Esophagus squamous epithelium (tissue), 5 donors: ENCODE measurements at regions of chr10 and their contacts with region 1.

Region 1: GRCh38 chr10:123559066-123559822 is 106.9 kb upstream of the GPR26 start:
- DNase-seq: no peak
- H3K4me3 ChIP-seq: no peak overlapping the region
- H3K27ac ChIP-seq: no peak overlapping the region
- H3K4me1 ChIP-seq: peaks cover 0 to 4% (median 0%) of the 10 kb centered on the region in 3 donors
- H3K27me3 ChIP-seq: peaks cover 0 to 67% (median 0%) of the 10 kb centered on the region in 4 donors
- CTCF ChIP-seq: peak; percentile 91 to 99 (median 96)
- POLR2A ChIP-seq: no peak

Region 2: GRCh38 chr10:123043409-123043925 is 515.8 kb before region 1 on chr10:
- intact Hi-C with region 1: loop called (anchors 10 kb)
- DNase-seq: no peak
- H3K4me3 ChIP-seq: no peak overlapping the region
- H3K27ac ChIP-seq: no peak overlapping the region
- H3K4me1 ChIP-seq: no peaks in the 10 kb centered on the region
- H3K27me3 ChIP-seq: no peaks in the 10 kb centered on the region
- CTCF ChIP-seq: peak in 5 of 6 experiments; percentile 43 to 77 (median 62)
- POLR2A ChIP-seq: no peak

Region 3: GRCh38 chr10:123132576-123133477 is 426.4 kb before region 1 on chr10:
- intact Hi-C with region 1: loop called (anchors 2 kb)
- DNase-seq: peak; percentile 18
- H3K4me3 ChIP-seq: peak overlapping the region in 2 of 4 donors; percentile 8 to 51
- H3K27ac ChIP-seq: no peak overlapping the region
- H3K4me1 ChIP-seq: peaks cover 44 to 54% (median 50%) of the 10 kb centered on the region in 3 donors
- H3K27me3 ChIP-seq: peaks cover 45 to 100% (median 50%) of the 10 kb centered on the region in 4 donors
- CTCF ChIP-seq: peak; percentile 86 to 90 (median 88)
- POLR2A ChIP-seq: no peak